CD8-positive, alpha-beta T cell (primary cell): ENCODE measurements at regions of chr16 and their contacts with region 1.

Region 1: DNA sequence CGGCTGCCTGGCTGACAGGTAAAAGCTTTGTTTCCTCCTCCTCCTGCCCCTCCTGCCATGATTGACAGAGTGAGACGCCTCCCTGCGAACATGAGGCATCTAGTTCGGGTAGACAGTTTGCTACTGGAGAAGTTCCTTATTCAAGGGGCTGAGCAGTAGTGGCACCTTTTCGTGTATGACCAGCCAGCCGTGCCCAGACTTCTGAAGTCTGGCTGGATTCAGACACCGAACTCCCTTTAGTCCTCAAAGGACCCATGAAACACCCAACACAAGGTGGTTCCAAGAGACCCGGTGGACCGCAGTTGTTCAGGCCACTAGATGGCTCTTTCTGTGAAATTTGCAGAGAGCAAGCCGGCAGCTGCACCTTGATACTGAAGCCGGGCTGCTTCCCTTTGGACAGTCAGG is 192.8 kb downstream of the XYLT1 start:
- DNase-seq: peak in 5 of 9 experiments; percentile 13 to 50 (median 28)
- ATAC-seq: no peak
- H3K4me3 ChIP-seq: no peak overlapping the region
- H3K4me3 Mint-ChIP-seq: no peak overlapping the region
- H3K27ac ChIP-seq: no peak overlapping the region
- H3K27ac Mint-ChIP-seq: no peak overlapping the region
- H3K4me1 ChIP-seq: peaks cover 7% of the 10 kb centered on the region
- H3K4me1 Mint-ChIP-seq: peaks cover 48% of the 10 kb centered on the region
- H3K27me3 ChIP-seq: no peaks in the 10 kb centered on the region
- H3K27me3 Mint-ChIP-seq: no peaks in the 10 kb centered on the region
- CTCF ChIP-seq: no peak

Region 2: GRCh38 chr16:17289674-17290635 is 12.0 kb after region 1 on chr16:
- CTCF ChIA-PET with region 1: interaction called, 10 read pairs
- POLR2A ChIA-PET with region 1: no interaction called
- intact Hi-C with region 1: no loop called
- DNase-seq: no peak
- ATAC-seq: no peak
- H3K4me3 ChIP-seq: no peak overlapping the region
- H3K4me3 Mint-ChIP-seq: no peak overlapping the region
- H3K27ac ChIP-seq: no peak overlapping the region
- H3K27ac Mint-ChIP-seq: no peak overlapping the region
- H3K4me1 ChIP-seq: no peaks in the 10 kb centered on the region
- H3K4me1 Mint-ChIP-seq: peaks cover 12% of the 10 kb centered on the region
- H3K27me3 ChIP-seq: no peaks in the 10 kb centered on the region
- H3K27me3 Mint-ChIP-seq: no peaks in the 10 kb centered on the region
- CTCF ChIP-seq: no peak